ENCODE measurements at regions of chr6 and their contacts with region 1.

Region 1: DNA sequence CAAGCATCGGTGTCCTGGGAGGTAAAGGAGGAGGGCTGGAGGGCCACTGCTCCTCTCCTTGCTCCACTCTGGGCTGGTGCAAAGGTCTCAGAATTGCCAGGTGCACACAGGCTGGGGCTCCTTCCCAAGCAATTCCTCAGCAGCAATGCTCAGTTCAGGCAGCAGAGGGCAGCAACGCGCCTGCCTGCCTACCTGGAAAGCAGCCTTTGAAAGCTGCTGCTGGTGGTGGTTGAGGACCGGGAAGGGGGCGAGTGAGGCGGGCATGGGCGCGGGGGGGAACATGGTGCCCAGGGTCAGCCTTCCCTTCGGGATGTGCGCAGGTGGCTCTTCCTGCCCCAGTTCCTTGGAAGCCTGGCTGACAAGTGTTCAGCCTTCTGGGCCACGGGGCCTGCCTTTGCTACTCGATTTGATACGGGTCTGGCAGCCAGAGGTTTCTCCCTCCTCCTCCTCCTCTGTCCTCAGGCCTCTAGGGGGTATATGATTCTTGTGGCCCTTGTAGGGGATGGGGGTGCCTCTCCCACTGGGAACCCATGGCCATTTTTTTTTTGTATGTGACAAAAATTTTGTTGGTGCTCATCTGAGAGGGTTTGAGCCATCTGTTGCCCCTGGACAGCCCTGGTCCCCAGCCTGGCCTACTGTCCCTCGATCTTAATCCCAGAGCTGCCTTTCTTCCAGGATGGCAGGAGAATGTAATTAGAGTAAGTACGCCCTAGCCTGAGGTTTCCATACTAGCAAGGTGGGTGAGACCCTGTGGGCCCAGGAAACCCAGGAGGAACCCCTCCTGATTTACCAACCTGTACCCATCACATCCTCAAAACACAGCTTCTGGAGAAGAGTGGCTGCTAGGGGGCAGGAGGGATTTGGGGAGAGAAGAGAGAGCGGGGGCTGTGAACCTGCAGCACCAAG is 20.1 kb downstream of the MRPS18A start:
- DNase-seq: peak; percentile 58 to 89 (median 80)
- ATAC-seq: peak; percentile 83
- H3K4me3 ChIP-seq: no peak overlapping the region
- H3K4me3 Mint-ChIP-seq: peak overlapping the region; percentile 72
- H3K27ac ChIP-seq: no peak overlapping the region
- H3K27ac Mint-ChIP-seq: peak overlapping the region; percentile 67
- H3K4me1 ChIP-seq: peaks cover 17% of the 10 kb centered on the region
- H3K4me1 Mint-ChIP-seq: peaks cover 20% of the 10 kb centered on the region
- H3K27me3 ChIP-seq: no peaks in the 10 kb centered on the region
- H3K27me3 Mint-ChIP-seq: no peaks in the 10 kb centered on the region
- CTCF ChIP-seq: peak; percentile 78

Region 2: DNA sequence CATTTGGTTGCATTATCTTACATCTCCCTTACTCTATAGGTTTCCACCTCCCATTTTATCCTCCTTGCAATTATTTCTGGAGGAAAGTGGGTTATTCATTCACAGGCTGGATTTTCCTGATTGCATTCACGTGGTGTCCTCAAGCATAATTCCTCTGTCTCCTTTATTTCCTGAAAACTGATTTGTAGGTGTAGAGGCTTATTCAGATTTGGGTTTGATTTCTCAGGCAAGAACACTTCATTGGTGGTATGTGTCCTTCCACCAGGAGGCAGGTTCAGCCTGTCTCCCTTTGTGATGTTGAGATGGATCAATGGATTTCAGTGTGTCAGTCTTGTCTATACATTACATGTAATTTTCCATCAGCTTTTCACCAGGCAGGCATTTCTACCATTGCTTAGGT is 455.5 kb before region 1 on chr6:
- CTCF ChIA-PET with region 1: no interaction called
- POLR2A ChIA-PET with region 1: no interaction called
- intact Hi-C with region 1: no loop called
- DNase-seq: peak in 1 of 14 experiments; percentile 20
- ATAC-seq: no peak
- H3K4me3 ChIP-seq: no peak overlapping the region
- H3K4me3 Mint-ChIP-seq: no peak overlapping the region
- H3K27ac ChIP-seq: no peak overlapping the region
- H3K27ac Mint-ChIP-seq: no peak overlapping the region
- H3K4me1 ChIP-seq: no peaks in the 10 kb centered on the region
- H3K4me1 Mint-ChIP-seq: no peaks in the 10 kb centered on the region
- H3K27me3 ChIP-seq: no peaks in the 10 kb centered on the region
- H3K27me3 Mint-ChIP-seq: no peaks in the 10 kb centered on the region
- CTCF ChIP-seq: no peak

Region 3: GRCh38 chr6:43582911-43583310 is 84.6 kb before region 1 on chr6:
- CTCF ChIA-PET with region 1: no interaction called
- POLR2A ChIA-PET with region 1: no interaction called
- intact Hi-C with region 1: no loop called
- DNase-seq: no peak
- ATAC-seq: no peak
- H3K4me3 ChIP-seq: no peak overlapping the region
- H3K4me3 Mint-ChIP-seq: peak overlapping the region; percentile 11
- H3K27ac ChIP-seq: no peak overlapping the region
- H3K27ac Mint-ChIP-seq: peak overlapping the region; percentile 76
- H3K4me1 ChIP-seq: peaks cover 32% of the 10 kb centered on the region
- H3K4me1 Mint-ChIP-seq: peaks cover 49% of the 10 kb centered on the region
- H3K27me3 ChIP-seq: no peaks in the 10 kb centered on the region
- H3K27me3 Mint-ChIP-seq: no peaks in the 10 kb centered on the region
- CTCF ChIP-seq: no peak

Region 4: GRCh38 chr6:43608310-43608763 is 59.2 kb before region 1 on chr6:
- CTCF ChIA-PET with region 1: no interaction called
- POLR2A ChIA-PET with region 1: no interaction called
- intact Hi-C with region 1: loop called in 1 of 2 experiments (anchors 5 kb)
- DNase-seq: peak; percentile 32 to 77 (median 49)
- ATAC-seq: peak; percentile 48
- H3K4me3 ChIP-seq: no peak overlapping the region
- H3K4me3 Mint-ChIP-seq: no peak overlapping the region
- H3K27ac ChIP-seq: no peak overlapping the region
- H3K27ac Mint-ChIP-seq: no peak overlapping the region
- H3K4me1 ChIP-seq: no peaks in the 10 kb centered on the region
- H3K4me1 Mint-ChIP-seq: no peaks in the 10 kb centered on the region
- H3K27me3 ChIP-seq: no peaks in the 10 kb centered on the region
- H3K27me3 Mint-ChIP-seq: no peaks in the 10 kb centered on the region
- CTCF ChIP-seq: peak; percentile 91

Region 5: GRCh38 chr6:43687437-43688347 is 20.2 kb after region 1 on chr6 and contains the start of gene MRPS18A:
- CTCF ChIA-PET with region 1: interaction called, 16 read pairs
- POLR2A ChIA-PET with region 1: no interaction called
- intact Hi-C with region 1: no loop called
- DNase-seq: peak; percentile 57 to 86 (median 72)
- ATAC-seq: peak; percentile 95
- H3K4me3 ChIP-seq: peak within 1 kb of the TSS; percentile 75
- H3K4me3 Mint-ChIP-seq: peak within 1 kb of the TSS; percentile 96
- H3K27ac ChIP-seq: peak within 1 kb of the TSS; percentile 56 to 65
- H3K27ac Mint-ChIP-seq: peak within 1 kb of the TSS; percentile 83
- H3K4me1 ChIP-seq: peaks cover 33% of the 10 kb centered on the region
- H3K4me1 Mint-ChIP-seq: peaks cover 52% of the 10 kb centered on the region
- H3K27me3 ChIP-seq: peaks cover 0 to 1% of the 10 kb centered on the region in 2 experiments
- H3K27me3 Mint-ChIP-seq: no peaks in the 10 kb centered on the region
- CTCF ChIP-seq: no peak
- total RNA-seq, gene MRPS18A: 26.1 to 27.7 TPM

Region 6: GRCh38 chr6:43758617-43759050 is 91.1 kb after region 1 on chr6:
- CTCF ChIA-PET with region 1: no interaction called
- POLR2A ChIA-PET with region 1: no interaction called
- intact Hi-C with region 1: loop called (anchors 2 to 10 kb)
- DNase-seq: peak in 3 of 14 experiments; percentile 16 to 33 (median 22)
- ATAC-seq: peak; percentile 34
- H3K4me3 ChIP-seq: no peak overlapping the region
- H3K4me3 Mint-ChIP-seq: no peak overlapping the region
- H3K27ac ChIP-seq: no peak overlapping the region
- H3K27ac Mint-ChIP-seq: no peak overlapping the region
- H3K4me1 ChIP-seq: no peaks in the 10 kb centered on the region
- H3K4me1 Mint-ChIP-seq: no peaks in the 10 kb centered on the region
- H3K27me3 ChIP-seq: peaks cover 0 to 3% of the 10 kb centered on the region in 2 experiments
- H3K27me3 Mint-ChIP-seq: peaks cover 4% of the 10 kb centered on the region
- CTCF ChIP-seq: peak; percentile 54

Region 7: GRCh38 chr6:43769526-43770416 is 102.3 kb after region 1 on chr6 and contains the start of gene VEGFA:
- CTCF ChIA-PET with region 1: interaction called, 5 read pairs
- POLR2A ChIA-PET with region 1: no interaction called
- intact Hi-C with region 1: loop called in 1 of 2 experiments (anchors 10 kb)
- DNase-seq: peak; percentile 81 to 93 (median 85)
- ATAC-seq: peak; percentile 84
- H3K4me3 ChIP-seq: peak within 1 kb of the TSS; percentile 62
- H3K4me3 Mint-ChIP-seq: peak within 1 kb of the TSS; percentile 88
- H3K27ac ChIP-seq: no peak within 1 kb of the TSS
- H3K27ac Mint-ChIP-seq: peak within 1 kb of the TSS; percentile 39
- H3K4me1 ChIP-seq: peaks cover 33% of the 10 kb centered on the region
- H3K4me1 Mint-ChIP-seq: peaks cover 22% of the 10 kb centered on the region
- H3K27me3 ChIP-seq: peaks cover 27 to 28% of the 10 kb centered on the region in 2 experiments
- H3K27me3 Mint-ChIP-seq: peaks cover 38% of the 10 kb centered on the region
- CTCF ChIP-seq: peak; percentile 94
- total RNA-seq, gene VEGFA: 3.5 to 3.7 TPM

Region 8: DNA sequence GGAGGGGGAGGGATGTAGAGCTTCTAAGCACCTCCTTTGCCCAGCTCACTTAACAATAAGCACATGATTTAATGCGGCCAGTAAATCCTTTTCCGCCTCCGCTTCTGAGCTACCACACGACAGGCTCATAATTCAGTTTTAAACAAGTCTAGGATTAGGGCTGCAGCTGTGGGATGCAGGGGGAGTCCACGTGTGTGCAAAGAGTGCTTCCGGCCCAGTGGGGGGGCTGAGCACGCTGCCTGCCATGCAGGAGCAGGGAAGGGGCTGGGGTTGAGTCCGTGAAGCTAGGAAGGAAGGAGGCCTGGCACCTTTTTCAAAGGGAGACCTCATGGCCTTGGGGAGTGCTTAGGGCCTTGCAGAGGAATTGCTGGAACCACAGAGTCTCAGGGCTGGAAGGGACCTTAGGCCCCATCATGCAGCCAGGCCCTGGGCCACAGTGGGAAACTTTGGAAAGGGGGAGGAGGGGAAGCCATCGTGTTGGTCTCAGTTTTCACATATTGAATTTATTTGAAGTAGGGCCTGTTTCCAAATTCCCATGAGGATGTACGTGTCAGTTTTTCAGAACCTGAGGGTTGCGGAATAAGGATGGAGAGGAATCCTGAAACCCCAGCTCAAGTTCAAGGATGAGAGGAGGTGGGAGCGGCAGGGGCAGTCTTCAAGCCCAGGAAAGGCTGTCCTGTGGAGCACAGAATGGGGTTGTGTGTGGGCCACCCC is 198.6 kb after region 1 on chr6:
- CTCF ChIA-PET with region 1: no interaction called
- POLR2A ChIA-PET with region 1: no interaction called
- intact Hi-C with region 1: no loop called
- DNase-seq: no peak
- ATAC-seq: no peak
- H3K4me3 ChIP-seq: no peak overlapping the region
- H3K4me3 Mint-ChIP-seq: no peak overlapping the region
- H3K27ac ChIP-seq: no peak overlapping the region
- H3K27ac Mint-ChIP-seq: no peak overlapping the region
- H3K4me1 ChIP-seq: no peaks in the 10 kb centered on the region
- H3K4me1 Mint-ChIP-seq: no peaks in the 10 kb centered on the region
- H3K27me3 ChIP-seq: peaks cover 0 to 5% of the 10 kb centered on the region in 2 experiments
- H3K27me3 Mint-ChIP-seq: peaks cover 13% of the 10 kb centered on the region
- CTCF ChIP-seq: no peak